ENCODE measurements at regions of chr3 and their contacts with region 1.

Region 1: DNA sequence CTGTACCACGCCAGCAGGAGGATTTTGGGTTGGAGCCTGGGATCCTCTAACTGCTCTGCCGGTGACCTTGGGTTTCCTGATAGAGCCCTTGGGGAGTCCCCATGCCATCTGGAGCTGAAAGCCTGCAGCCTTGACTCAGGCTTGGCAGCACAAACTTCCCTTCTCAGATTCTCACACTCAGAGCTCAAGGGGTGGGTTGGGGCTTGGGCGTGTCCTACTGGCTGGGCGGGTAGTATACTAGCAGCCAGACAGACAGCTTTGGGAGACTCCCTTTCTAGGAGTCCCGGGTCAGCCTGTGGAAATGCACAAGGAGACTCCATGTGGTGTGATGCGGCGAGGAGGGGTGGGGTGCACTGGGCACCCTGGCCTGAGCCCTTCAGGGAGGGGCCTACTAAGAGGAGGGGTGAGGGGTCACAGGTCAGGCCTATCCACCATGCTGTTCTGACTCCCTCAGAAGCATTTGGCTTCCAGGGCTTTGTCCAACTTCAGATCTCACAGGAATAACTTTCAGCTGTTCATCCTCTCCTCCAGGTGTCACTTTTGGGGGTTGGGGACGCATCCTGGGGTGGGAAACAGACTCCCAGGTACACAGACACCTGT is 21.6 kb upstream of the PLXNA1 start:
- DNase-seq: peak; percentile 88
- H3K4me3 Mint-ChIP-seq: no peak overlapping the region
- H3K27ac Mint-ChIP-seq: peak overlapping the region; percentile 55
- H3K4me1 Mint-ChIP-seq: peaks cover 22% of the 10 kb centered on the region
- H3K27me3 Mint-ChIP-seq: no peaks in the 10 kb centered on the region
- CTCF ChIP-seq: no peak

Region 2: DNA sequence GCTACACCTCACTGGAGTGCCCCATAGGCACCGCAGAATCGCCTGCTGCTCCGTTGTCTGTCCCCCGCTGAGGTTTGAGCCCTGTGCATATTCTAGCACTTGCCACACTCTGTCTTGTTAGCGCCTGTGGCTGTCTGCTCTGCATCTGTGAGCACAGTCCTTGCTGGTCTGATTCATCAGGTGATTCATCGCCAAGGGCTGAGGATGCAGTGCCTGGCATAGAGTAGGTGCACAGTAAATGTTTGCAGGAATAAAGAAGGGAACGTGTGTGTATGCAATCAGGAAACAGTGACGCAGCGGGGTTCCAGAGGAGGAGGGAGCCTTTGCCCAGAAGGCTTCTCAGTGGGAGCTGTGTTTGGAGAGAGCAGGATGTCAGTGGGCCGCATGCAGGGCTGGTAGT is 102.4 kb before region 1 on chr3:
- CTCF ChIA-PET with region 1: no interaction called
- POLR2A ChIA-PET with region 1: no interaction called
- intact Hi-C with region 1: loop called (anchors 2 kb)
- DNase-seq: peak; percentile 99
- H3K4me3 Mint-ChIP-seq: no peak overlapping the region
- H3K27ac Mint-ChIP-seq: peak overlapping the region; percentile 4
- H3K4me1 Mint-ChIP-seq: peaks cover 23% of the 10 kb centered on the region
- H3K27me3 Mint-ChIP-seq: no peaks in the 10 kb centered on the region
- CTCF ChIP-seq: no peak

Region 3: GRCh38 chr3:127144631-127145030 is 183.3 kb after region 1 on chr3:
- CTCF ChIA-PET with region 1: no interaction called
- POLR2A ChIA-PET with region 1: no interaction called
- intact Hi-C with region 1: no loop called
- DNase-seq: no peak
- H3K4me3 Mint-ChIP-seq: no peak overlapping the region
- H3K27ac Mint-ChIP-seq: no peak overlapping the region
- H3K4me1 Mint-ChIP-seq: no peaks in the 10 kb centered on the region
- H3K27me3 Mint-ChIP-seq: no peaks in the 10 kb centered on the region
- CTCF ChIP-seq: no peak

Measured in MCF 10A (cell line).